IMR-90 (cell line): ENCODE measurements at regions of chr16 and their contacts with region 1.

Region 1: DNA sequence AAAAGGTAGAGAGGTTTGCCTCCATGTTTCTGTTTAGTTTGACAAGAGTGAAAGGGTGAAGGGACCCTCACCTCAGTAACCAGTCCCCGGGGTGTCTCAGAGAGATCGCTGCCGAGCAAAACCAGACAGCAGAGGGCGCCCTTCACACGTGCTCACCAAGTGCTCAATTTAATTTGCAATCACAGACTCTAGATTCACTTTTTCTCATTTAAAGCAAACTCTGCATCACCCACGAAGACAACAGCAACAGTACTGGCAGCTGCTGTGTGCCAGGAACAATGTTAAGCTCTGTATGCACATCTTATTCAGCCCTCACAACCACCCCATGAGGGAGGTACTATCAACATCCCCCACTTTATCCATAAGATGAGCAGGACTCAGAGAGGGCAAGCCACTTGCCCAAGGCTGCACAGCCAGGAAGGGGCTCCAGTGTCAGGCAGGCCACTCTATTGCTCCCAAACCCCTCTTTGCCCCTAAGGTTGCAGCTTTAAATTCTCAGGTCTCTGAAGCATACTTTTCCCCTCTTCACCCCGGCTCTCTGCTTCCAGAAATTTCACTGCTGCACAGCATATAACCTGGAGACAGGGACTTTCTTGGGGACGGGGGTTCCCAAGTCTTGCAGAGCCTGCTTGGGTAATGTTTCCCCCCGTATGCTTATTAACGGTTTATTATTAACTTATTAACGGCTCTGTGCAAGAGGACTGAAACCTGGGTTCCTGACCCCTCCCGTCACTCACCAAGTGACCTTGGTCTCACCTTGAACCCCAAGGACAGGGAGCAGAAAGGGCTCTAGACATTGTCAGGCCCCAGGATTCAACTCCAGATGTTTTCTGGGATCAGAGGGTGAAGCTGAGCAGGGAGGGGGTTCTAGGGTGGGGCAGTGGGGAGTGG is 70.9 kb downstream of the CNGB1 start:
- DNase-seq: peak; percentile 62
- ATAC-seq: peak; percentile 93
- H3K4me3 ChIP-seq: no peak overlapping the region
- H3K27ac ChIP-seq: no peak overlapping the region
- H3K4me1 ChIP-seq: no peaks in the 10 kb centered on the region
- H3K27me3 ChIP-seq: peaks cover 26% of the 10 kb centered on the region
- CTCF ChIP-seq: peak; percentile 86
- POLR2A ChIP-seq: no peak
- RAD21 ChIP-seq: peak; percentile 89

Region 2: DNA sequence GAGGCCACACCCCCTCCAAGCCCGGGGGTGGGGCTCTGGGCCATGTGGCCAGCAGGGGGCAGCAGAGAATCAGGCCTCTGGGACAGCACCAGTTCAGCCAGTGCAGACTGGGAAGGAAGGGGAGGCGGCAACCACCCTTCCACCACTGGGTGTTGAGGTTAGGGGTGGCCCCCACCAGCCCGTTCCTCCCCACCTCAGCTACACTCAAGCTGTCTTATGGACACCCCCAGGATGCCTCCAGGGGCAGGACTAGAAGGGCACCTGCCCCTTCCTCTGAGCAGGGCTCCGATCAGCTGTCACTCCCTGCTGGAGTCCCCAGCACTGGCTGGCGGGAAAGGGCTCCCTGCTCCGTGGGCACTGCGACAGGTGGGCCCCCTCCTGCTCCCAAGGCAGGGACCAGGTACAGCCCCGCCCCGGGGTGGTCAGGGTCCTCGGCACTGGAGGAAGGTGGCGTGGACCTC is 142.7 kb before region 1 on chr16:
- CTCF ChIA-PET with region 1: interaction called, 3 read pairs
- POLR2A ChIA-PET with region 1: no interaction called
- dilution Hi-C with region 1: no loop called
- in situ Hi-C with region 1: no loop called
- intact Hi-C with region 1: loop called (anchors 1 kb)
- DNase-seq: peak; percentile 69
- ATAC-seq: peak; percentile 99
- H3K4me3 ChIP-seq: no peak overlapping the region
- H3K27ac ChIP-seq: no peak overlapping the region
- H3K4me1 ChIP-seq: 0 out of 2 replicates have a peak, but pooled peaks cover 2% of the 10 kb centered on the region
- H3K27me3 ChIP-seq: no peaks in the 10 kb centered on the region
- CTCF ChIP-seq: peak; percentile 97
- POLR2A ChIP-seq: no peak; the same call in 1 of the 2 replicates
- RAD21 ChIP-seq: peak; percentile 95